ENCODE measurements at regions of chr3 and their contacts with region 1.

Region 1: DNA sequence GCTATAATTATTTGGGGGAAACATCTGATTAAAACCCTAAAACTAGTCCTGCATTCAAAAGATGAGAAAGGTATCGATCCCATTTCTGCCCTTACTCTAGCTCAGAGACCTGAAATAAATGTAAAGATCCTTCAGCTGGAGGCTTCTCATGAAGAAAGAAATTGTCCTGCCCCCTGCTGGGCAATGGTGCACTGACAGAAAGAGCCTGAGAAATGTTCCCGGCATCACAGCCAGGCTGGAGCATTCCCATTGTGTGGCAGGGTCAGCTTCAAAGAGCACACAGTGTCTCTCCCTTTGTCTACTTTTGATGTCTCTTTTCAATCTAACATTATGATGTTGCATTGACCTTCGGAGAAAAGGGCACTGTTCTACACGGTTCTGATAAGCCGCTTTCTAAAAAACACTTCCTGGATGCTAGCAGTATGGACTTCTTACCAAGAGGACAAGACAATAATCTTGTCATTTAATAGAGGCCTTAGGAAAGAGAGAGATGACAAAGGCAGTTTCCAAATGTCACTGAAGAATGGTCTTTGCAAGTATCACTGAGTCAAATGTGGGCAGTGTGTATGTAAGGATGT is 287.5 kb downstream of the MAGI1 start:
- DNase-seq: peak; percentile 52
- H3K4me3 ChIP-seq: peak overlapping the region in 1 of 2 experiments; percentile 5; a peak in 1 of 4 replicates
- H3K27ac ChIP-seq: no peak overlapping the region
- H3K4me1 ChIP-seq: peaks cover 0 to 3% of the 10 kb centered on the region in 2 experiments; a peak in 1 of 4 replicates
- H3K27me3 ChIP-seq: no peaks in the 10 kb centered on the region
- CTCF ChIP-seq: peak; percentile 80
- EP300 ChIP-seq: no peak
- RAD21 ChIP-seq: peak; percentile 68

Region 2: DNA sequence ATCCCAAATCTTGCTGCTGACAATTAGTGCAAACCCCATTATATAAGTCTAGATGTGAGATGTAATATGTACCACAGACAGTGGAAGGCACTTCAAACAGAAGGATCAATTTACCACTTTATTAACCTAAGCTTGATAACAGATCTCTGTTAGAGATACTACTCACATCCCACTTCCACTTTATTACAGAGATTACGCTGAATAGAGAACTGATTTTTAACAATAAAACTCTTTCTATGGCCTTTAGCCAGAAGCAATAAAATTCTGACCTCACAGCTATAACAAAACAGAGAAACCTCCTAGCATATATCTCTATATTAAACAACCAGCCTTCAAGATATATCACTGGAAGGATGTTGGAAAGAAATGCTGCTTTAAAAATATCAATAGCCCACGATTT is 230.2 kb before region 1 on chr3:
- CTCF ChIA-PET with region 1: no interaction called
- POLR2A ChIA-PET with region 1: no interaction called
- DNase-seq: no peak
- H3K4me3 ChIP-seq: no peak overlapping the region
- H3K27ac ChIP-seq: no peak overlapping the region
- H3K4me1 ChIP-seq: peaks cover 0 to 9% of the 10 kb centered on the region in 2 experiments; a peak in 2 of 4 replicates
- H3K27me3 ChIP-seq: no peaks in the 10 kb centered on the region
- CTCF ChIP-seq: no peak
- EP300 ChIP-seq: no peak
- RAD21 ChIP-seq: no peak

Region 3: DNA sequence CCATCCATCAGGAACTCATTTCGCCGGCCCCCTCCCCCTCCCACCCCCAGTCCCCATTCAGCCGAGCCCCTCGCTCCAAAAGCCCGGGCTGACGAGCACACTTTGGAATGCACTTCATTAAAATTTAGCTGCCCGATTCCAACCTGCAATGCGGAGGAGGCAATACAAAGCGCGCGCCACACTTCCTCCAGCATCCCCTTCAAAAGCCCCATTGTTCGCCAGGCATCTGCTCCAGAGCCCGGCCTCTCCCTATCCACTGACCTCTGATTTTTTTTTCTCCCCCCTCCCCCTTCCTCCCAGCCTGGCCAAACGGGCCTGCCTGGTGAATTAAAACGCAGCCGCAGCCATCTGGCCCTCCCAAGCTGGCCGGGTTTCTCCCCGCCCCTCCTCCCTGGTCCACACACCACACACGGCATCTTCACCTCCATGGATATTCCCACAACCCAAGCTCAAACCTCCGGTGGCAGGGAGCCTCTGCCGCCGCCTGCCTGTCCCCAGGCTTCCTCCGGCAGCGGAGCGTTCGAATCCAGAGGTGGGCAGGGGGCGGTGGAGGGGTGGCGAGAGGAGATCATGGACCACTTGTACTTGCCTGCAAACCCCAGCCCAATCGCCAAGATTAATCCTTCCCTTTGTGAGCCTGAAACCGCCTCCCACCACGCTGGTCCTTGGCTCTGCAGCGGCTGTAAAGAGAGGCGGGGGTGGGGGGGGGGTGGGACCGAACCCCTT is 153.8 kb before region 1 on chr3:
- CTCF ChIA-PET with region 1: interaction called, 12 read pairs
- POLR2A ChIA-PET with region 1: no interaction called
- DNase-seq: peak; percentile 87
- H3K4me3 ChIP-seq: peak overlapping the region; percentile 55 to 58
- H3K27ac ChIP-seq: peak overlapping the region in 1 of 2 experiments; percentile 94; a peak in 2 of 4 replicates
- H3K4me1 ChIP-seq: peaks cover 0 to 17% of the 10 kb centered on the region in 2 experiments; a peak in 2 of 4 replicates
- H3K27me3 ChIP-seq: no peaks in the 10 kb centered on the region
- CTCF ChIP-seq: no peak
- EP300 ChIP-seq: peak in 1 of 2 experiments; percentile 42; a peak in 2 of 4 replicates
- RAD21 ChIP-seq: peak; percentile 27; the same call in 1 of the 2 replicates

Region 4: GRCh38 chr3:65732051-65732935 is 18.9 kb before region 1 on chr3:
- CTCF ChIA-PET with region 1: interaction called, 28 read pairs
- POLR2A ChIA-PET with region 1: no interaction called
- DNase-seq: peak; percentile 71
- H3K4me3 ChIP-seq: peak overlapping the region in 1 of 2 experiments; percentile 37; a peak in 1 of 4 replicates
- H3K27ac ChIP-seq: peak overlapping the region in 1 of 2 experiments; percentile 41; a peak in 1 of 4 replicates
- H3K4me1 ChIP-seq: peaks cover 11% of the 10 kb centered on the region in 2 experiments
- H3K27me3 ChIP-seq: no peaks in the 10 kb centered on the region
- CTCF ChIP-seq: peak; percentile 85
- EP300 ChIP-seq: no peak
- RAD21 ChIP-seq: peak; percentile 88